ENCODE measurements at regions of chr9 and their contacts with region 1.

Region 1: DNA sequence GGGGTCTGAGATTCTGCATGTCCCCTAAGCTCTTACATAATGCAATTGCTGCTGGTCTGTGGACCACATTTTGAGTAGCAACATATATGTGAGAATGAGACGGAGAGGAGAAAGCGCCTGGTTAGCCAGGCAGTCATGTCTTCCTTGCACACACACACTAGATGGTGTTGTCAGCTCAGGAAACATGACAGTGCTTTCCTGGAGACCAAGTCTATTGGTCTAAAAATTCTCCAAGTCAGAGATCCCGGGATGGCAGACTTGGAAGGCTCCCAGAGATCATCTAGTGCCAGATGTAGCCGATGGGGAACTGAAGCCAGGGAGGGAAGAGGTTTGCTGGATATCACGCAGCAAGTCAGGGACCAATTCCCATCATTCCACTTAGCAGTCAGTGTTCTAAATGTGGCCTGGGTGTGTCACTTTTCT is 53.4 kb downstream of the GALNT12 start:
- DNase-seq: peak; percentile 35
- H3K4me3 ChIP-seq: no peak overlapping the region
- H3K27ac ChIP-seq: no peak overlapping the region
- H3K4me1 ChIP-seq: peaks cover 10% of the 10 kb centered on the region
- H3K27me3 ChIP-seq: no peaks in the 10 kb centered on the region
- CTCF ChIP-seq: peak in 1 of 3 experiments; percentile 28
- POLR2A ChIP-seq: no peak

Region 2: GRCh38 chr9:99130069-99130468 is 269.2 kb after region 1 on chr9:
- intact Hi-C with region 1: loop called (anchors 10 kb)
- DNase-seq: no peak
- H3K4me3 ChIP-seq: no peak overlapping the region
- H3K27ac ChIP-seq: no peak overlapping the region
- H3K4me1 ChIP-seq: no peaks in the 10 kb centered on the region
- H3K27me3 ChIP-seq: no peaks in the 10 kb centered on the region
- CTCF ChIP-seq: no peak
- POLR2A ChIP-seq: no peak